Posterior cingulate gyrus (tissue), 11 donors: ENCODE measurements at regions of chr3 and their contacts with region 1.

Region 1: GRCh38 chr3:71064288-71064955 is 519.1 kb downstream of the FOXP1 start:
- DNase-seq: peak in 5 of 10 donors; percentile 28 to 83 (median 66)

Region 2: DNA sequence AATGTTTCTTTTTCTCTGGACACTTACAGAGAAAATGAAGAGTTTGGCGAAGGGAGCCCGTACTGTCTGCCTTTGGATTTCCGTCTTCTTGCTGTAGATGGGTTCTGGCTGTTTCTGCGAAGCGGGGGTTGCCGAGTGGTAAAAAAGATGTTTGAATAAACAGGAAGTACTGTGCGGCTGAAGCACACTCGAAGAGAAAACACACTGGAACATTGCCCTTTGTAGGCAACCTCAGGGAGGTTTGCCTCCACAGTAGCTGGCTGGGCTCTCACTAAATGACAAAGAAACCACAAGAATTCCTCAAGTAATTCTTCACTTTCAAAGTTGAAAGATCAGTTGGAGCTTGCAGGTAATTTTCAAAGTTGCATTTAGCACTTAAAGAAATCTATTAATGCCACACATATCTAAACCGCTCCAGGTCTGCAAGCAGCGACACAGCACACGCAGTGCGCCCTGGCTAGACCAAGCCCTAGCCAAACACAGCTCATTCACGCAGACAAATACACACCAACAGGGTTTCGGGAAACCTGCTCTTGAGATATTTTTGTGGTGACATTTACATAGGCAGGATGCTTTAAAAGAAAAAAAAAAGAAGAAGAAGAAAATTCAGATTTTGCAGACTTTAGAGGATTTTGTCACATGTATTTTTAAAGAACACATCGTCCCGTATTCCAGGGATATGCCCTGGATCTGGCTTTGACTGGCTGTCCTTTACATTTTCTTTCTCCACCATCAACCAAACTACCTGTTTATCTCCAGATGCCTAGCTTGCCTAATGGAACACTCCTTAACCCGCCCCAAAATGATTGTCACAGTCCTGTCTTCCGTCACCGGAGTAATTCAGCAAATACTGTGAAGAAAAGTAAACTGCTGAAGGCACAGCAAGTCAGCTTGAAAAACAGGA is 66.3 kb after region 1 on chr3:
- intact Hi-C with region 1: loop called (anchors 10 kb)
- DNase-seq: peak in 5 of 10 donors; percentile 25 to 83 (median 38)

Region 3: DNA sequence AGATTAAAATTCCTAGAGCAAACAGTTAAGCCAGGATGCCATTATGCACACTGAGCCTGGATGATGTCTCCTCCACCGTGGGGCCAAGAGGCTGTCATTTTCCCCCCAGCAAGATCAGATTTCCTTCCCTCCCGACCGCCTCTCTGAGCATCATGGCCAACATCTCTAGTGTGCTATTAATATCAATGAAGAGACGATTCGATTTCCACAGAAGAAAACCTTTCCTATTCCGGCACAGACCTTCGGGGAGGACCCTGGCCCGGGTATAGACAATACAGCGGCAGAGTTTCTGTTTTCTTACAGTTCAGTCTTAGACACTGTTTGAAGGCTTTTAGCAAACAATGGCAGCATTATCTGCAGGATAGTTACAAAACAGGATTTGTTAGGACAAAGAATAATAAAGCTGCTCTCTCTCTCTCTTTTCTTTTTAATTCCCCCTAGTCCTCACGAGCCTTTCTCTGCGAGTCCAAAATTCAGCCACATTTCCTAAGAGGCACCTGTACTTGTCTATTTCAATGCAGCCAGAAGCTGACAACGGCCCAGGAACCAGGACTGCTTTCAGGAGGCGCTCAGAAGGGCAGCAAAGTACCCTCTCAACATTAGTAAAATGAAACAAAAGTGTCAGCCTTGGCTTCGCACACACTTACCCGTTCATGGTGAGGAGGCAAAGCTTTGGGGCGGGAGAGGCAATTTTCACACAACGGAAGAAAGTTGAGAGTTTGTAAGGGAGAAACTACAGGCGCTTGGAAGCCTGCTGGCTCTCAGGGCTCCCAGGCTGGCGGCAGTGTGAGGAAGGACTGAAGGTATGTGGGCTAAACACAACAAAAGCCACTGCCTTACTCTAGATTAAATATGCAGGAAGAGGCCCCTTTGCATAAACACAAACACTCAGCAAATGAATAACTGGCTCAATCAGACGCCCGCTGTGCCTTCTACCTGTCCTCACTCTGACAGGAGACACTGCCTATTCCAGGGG is 241.1 kb after region 1 on chr3:
- intact Hi-C with region 1: loop called (anchors 10 kb)
- DNase-seq: peak in 4 of 10 donors; percentile 14 to 87 (median 44)